AG04450 (cell line): ENCODE measurements at regions of chr10 and their contacts with region 1.

Region 1: DNA sequence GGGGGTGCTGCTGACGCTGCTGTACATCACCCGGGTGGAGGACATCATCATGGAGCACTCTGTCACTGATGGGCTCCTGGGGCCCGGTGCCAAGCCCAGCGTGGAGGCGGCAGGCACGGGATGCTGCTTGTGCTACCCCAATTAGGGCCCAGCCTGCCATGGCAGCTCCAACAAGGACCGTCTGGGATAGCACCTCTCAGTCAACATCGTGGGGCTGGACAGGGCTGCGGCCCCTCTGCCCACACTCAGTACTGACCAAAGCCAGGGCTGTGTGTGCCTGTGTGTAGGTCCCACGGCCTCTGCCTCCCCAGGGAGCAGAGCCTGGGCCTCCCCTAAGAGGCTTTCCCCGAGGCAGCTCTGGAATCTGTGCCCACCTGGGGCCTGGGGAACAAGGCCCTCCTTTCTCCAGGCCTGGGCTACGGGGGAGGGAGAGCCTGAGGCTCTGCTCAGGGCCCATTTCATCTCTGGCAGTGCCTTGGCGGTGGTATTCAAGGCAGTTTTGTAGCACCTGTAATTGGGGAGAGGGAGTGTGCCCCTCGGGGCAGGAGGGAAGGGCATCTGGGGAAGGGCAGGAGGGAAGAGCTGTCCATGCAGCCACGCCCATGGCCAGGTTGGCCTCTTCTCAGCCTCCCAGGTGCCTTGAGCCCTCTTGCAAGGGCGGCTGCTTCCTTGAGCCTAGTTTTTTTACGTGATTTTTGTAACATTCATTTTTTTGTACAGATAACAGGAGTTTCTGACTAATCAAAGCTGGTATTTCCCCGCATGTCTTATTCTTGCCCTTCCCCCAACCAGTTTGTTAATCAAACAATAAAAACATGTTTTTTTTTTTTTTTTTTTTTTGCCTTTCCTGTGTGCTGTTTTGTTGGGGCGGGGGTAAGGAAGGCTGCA is 55.8 kb downstream of the TSPAN15 start:
- DNase-seq: no peak
- H3K4me3 ChIP-seq: no peak overlapping the region
- H3K27ac ChIP-seq: no peak overlapping the region
- H3K27me3 ChIP-seq: peaks cover 27% of the 10 kb centered on the region
- CTCF ChIP-seq: no peak

Region 2: GRCh38 chr10:69425511-69426298 is 81.4 kb before region 1 on chr10:
- CTCF ChIA-PET with region 1: interaction called, 15 read pairs
- POLR2A ChIA-PET with region 1: no interaction called
- DNase-seq: no peak
- H3K4me3 ChIP-seq: no peak overlapping the region
- H3K27ac ChIP-seq: no peak overlapping the region
- H3K27me3 ChIP-seq: peaks cover 37% of the 10 kb centered on the region
- CTCF ChIP-seq: no peak